Naive thymus-derived CD4-positive, alpha-beta T cell (primary cell): ENCODE measurements at regions of chr16 and their contacts with region 1.

Region 1: GRCh38 chr16:75203667-75204409 is 3.1 kb downstream of the CTRB2 start:
- DNase-seq: no peak
- ATAC-seq: no peak
- H3K4me3 ChIP-seq: no peak overlapping the region
- H3K4me3 Mint-ChIP-seq: no peak overlapping the region
- H3K27ac ChIP-seq: no peak overlapping the region
- H3K27ac Mint-ChIP-seq: peak overlapping the region in 1 of 9 donors; percentile 38
- H3K4me1 ChIP-seq: peaks cover 0 to 14% of the 10 kb centered on the region in 2 donors
- H3K4me1 Mint-ChIP-seq: peaks cover 7 to 29% (median 22%) of the 10 kb centered on the region in 7 donors
- H3K27me3 ChIP-seq: no peaks in the 10 kb centered on the region
- H3K27me3 Mint-ChIP-seq: peaks cover 0 to 9% (median 0%) of the 10 kb centered on the region in 5 donors

Region 2: GRCh38 chr16:75219838-75220237 is 16.0 kb after region 1 on chr16:
- CTCF ChIA-PET with region 1: interaction called, 4 read pairs
- POLR2A ChIA-PET with region 1: interaction called, 7 read pairs
- intact Hi-C with region 1: loop called (anchors 2 kb)
- DNase-seq: peak in 5 of 9 donors; percentile 34 to 53 (median 44)
- ATAC-seq: peak; percentile 79
- H3K4me3 ChIP-seq: peak overlapping the region; percentile 39
- H3K4me3 Mint-ChIP-seq: peak overlapping the region; percentile 62 to 96 (median 90)
- H3K27ac ChIP-seq: peak overlapping the region; percentile 29
- H3K27ac Mint-ChIP-seq: peak overlapping the region; percentile 84 to 96 (median 93)
- H3K4me1 ChIP-seq: peaks cover 0 to 12% of the 10 kb centered on the region in 2 donors
- H3K4me1 Mint-ChIP-seq: peaks cover 0 to 18% (median 14%) of the 10 kb centered on the region in 7 donors
- H3K27me3 ChIP-seq: no peaks in the 10 kb centered on the region
- H3K27me3 Mint-ChIP-seq: no peaks in the 10 kb centered on the region